ENCODE measurements at regions of chr16 and their contacts with region 1.

Region 1: DNA sequence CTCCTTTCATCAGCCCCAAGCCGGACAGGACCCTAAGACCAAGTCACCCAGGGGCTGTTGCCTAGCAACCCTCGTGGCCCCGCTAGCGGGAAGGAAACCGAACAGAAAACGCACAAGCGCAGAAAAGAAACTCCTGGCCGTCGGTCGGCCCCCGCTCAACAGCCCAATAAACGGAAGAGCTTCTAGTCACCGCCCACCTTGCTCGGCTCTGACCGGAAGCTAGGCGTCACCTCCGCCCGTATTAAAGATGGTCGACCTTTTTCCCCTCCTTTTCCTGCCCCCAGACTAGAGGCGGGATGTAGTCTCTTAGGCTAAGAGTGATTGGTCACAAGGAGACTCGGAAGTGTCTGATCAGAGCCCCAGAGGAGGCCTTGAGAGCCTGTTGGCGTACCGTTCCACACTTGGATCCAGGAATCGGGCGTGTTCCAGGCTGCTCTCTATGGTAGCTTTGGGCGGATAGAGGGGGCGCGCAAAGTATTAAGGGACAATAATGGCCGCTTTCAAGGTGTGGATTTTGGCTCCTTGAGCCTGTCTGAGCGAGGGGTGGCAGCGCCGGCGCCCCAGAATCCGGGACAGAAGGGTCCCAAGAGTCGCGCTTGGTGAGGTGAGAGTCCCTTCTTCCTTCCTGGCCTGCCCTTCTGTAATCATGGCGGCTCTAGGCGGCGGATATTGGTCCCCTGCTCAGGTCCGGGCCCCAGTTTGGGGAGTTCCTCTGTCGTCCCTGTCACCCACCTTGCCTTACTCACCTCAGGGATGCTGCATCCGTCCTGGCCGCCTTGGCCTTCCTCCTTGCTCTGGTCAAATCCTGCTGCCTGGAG is at the starts of genes DHX38 and TXNL4B:
- DNase-seq: peak; percentile 96
- H3K4me3 Mint-ChIP-seq: peak within 1 kb of the TSS; percentile 96
- H3K27ac Mint-ChIP-seq: peak within 1 kb of the TSS; percentile 94
- H3K4me1 Mint-ChIP-seq: peaks cover 33% of the 10 kb centered on the region
- H3K27me3 Mint-ChIP-seq: no peaks in the 10 kb centered on the region
- total RNA-seq, gene DHX38: 72.2 to 77.7 TPM
- total RNA-seq, gene TXNL4B: 18.3 to 20.1 TPM

Region 2: GRCh38 chr16:71484006-71484893 is 609.4 kb before region 1 on chr16:
- CTCF ChIA-PET with region 1: no interaction called
- POLR2A ChIA-PET with region 1: no interaction called
- intact Hi-C with region 1: loop called (anchors 5 kb)
- DNase-seq: peak; percentile 89
- H3K4me3 Mint-ChIP-seq: peak overlapping the region; percentile 81
- H3K27ac Mint-ChIP-seq: peak overlapping the region; percentile 74
- H3K4me1 Mint-ChIP-seq: peaks cover 13% of the 10 kb centered on the region
- H3K27me3 Mint-ChIP-seq: no peaks in the 10 kb centered on the region

Region 3: DNA sequence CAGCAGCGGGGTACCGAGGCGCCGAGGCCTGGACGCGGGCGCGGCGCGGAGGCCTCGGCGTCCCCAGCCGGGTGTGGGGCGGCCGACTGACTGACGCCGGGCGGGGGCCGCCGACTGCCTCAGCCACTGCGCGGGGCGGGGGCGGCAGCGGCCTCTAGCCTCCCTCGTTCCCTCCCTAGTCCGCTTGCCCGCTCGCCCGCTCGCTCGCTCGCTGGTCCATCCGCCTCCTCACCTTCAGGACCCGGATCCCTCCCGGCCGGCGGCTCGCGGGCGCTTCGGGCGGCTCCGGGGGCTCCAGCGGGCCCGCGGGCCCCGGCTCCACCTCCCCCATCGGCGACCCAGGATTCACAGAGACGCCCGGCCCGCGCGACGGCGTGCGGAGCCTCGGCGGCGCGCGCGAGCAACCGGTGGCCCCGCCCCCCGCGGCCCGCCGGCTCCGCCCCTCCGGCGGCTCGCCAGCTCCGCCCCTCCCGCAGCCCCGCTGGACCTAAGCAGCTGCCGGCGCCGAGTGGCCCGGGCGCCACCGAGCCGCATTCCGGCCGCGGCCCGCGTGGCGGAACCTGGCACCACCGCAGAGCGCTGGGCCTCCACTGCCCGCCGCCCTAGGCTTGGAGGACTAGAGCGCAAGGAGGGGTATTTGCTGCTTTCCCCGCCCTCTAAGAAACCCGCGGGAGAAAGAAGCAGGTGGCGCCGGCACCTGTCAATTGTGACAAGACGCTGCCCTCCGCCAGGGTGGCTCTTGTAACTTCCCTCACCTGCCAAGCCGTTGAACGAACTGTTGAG is 369.9 kb before region 1 on chr16:
- CTCF ChIA-PET with region 1: no interaction called
- POLR2A ChIA-PET with region 1: no interaction called
- intact Hi-C with region 1: loop called (anchors 5 kb)
- DNase-seq: peak; percentile 83
- H3K4me3 Mint-ChIP-seq: peak overlapping the region; percentile 76
- H3K27ac Mint-ChIP-seq: no peak overlapping the region
- H3K4me1 Mint-ChIP-seq: peaks cover 15% of the 10 kb centered on the region
- H3K27me3 Mint-ChIP-seq: peaks cover 7% of the 10 kb centered on the region

Region 4: GRCh38 chr16:71894921-71895678 is 198.6 kb before region 1 on chr16 and contains the start of gene IST1:
- CTCF ChIA-PET with region 1: no interaction called
- POLR2A ChIA-PET with region 1: interaction called, 4 read pairs
- intact Hi-C with region 1: loop called (anchors 1 kb)
- DNase-seq: peak; percentile 99
- H3K4me3 Mint-ChIP-seq: peak within 1 kb of the TSS; percentile 95
- H3K27ac Mint-ChIP-seq: peak within 1 kb of the TSS; percentile 97
- H3K4me1 Mint-ChIP-seq: peaks cover 27% of the 10 kb centered on the region
- H3K27me3 Mint-ChIP-seq: no peaks in the 10 kb centered on the region
- total RNA-seq, gene IST1: 191 to 192 TPM

Region 5: DNA sequence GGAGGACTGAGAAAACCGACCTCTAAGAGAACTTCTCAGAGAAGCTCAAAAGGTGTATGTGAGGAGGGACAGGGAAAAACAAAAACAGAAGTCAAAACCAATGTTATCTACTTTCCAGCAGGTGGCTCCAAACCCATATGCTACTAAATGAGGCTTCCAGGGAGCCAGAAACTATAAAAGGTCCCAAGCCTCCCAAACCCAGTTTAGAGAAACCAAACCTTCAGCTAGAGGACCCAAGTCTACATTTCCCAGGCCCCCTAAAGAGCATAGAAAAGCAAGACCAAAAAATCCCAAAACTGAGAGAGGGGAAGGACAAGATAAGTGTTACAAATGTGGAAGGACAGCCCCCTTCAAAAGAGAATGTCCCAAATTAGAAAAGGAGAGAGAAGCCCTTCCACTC is 26.9 kb before region 1 on chr16:
- CTCF ChIA-PET with region 1: interaction called, 4 read pairs
- POLR2A ChIA-PET with region 1: no interaction called
- intact Hi-C with region 1: loop called (anchors 2 kb)
- DNase-seq: no peak
- H3K4me3 Mint-ChIP-seq: no peak overlapping the region
- H3K27ac Mint-ChIP-seq: no peak overlapping the region
- H3K4me1 Mint-ChIP-seq: no peaks in the 10 kb centered on the region
- H3K27me3 Mint-ChIP-seq: no peaks in the 10 kb centered on the region

Measured in activated CD4-positive, alpha-beta memory T cell treated with anti-CD3 and anti-CD28 coated beads for 36 hours (primary cell).